ENCODE measurements at regions of chr12 and their contacts with region 1.

Region 1: GRCh38 chr12:48105862-48106680 is at the start of gene SENP1:
- DNase-seq: peak; percentile 92
- ATAC-seq: peak; percentile 81
- H3K4me3 Mint-ChIP-seq: peak within 1 kb of the TSS; percentile 88
- H3K27ac Mint-ChIP-seq: peak within 1 kb of the TSS; percentile 94
- H3K4me1 Mint-ChIP-seq: peaks cover 54% of the 10 kb centered on the region
- H3K27me3 Mint-ChIP-seq: no peaks in the 10 kb centered on the region
- total RNA-seq, gene SENP1: 45.6 to 50.1 TPM

Region 2: GRCh38 chr12:48119078-48119833 is 13.2 kb after region 1 on chr12 and contains the start of gene PFKM:
- CTCF ChIA-PET with region 1: interaction called, 10 read pairs
- POLR2A ChIA-PET with region 1: interaction called, 5 read pairs
- DNase-seq: peak; percentile 85
- ATAC-seq: peak; percentile 100
- H3K4me3 Mint-ChIP-seq: peak within 1 kb of the TSS; percentile 95
- H3K27ac Mint-ChIP-seq: peak within 1 kb of the TSS; percentile 77
- H3K4me1 Mint-ChIP-seq: peaks cover 18% of the 10 kb centered on the region
- H3K27me3 Mint-ChIP-seq: peaks cover 21% of the 10 kb centered on the region
- total RNA-seq, gene PFKM: 20.6 to 22.7 TPM

Region 3: DNA sequence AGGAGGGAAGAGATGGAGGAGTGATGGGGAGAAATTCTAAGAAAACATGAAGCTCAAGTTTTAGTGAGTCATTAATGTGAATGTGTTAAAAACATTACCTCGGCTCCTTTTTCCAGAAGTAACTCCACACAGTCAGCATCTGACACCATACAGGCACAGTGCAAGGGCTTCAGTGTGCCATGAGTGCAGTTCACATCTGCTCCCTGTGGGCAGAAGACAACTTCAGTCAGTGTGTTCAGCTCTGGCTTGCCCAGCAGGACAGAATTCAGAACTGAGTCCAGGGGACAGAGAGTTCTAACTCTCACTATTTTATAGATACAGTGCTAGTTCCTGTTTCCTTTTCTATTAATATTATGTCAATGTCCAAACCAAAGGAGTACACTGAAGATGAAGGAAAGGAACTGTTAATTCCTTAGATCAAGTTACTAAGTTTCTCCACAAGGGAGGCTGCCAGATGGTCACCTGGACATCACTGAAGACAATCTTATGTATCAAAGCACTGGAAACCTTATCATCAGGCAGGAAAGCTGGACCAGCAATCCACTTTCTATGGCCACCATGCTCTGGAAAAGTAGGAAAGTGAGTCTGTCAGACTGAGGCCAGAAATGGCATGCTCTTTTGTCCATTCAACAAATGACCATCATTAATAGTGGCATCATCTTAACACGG is 45.2 kb after region 1 on chr12:
- CTCF ChIA-PET with region 1: interaction called, 13 read pairs
- POLR2A ChIA-PET with region 1: interaction called, 35 read pairs
- DNase-seq: no peak
- ATAC-seq: no peak
- H3K4me3 Mint-ChIP-seq: no peak overlapping the region
- H3K27ac Mint-ChIP-seq: no peak overlapping the region
- H3K4me1 Mint-ChIP-seq: peaks cover 20% of the 10 kb centered on the region
- H3K27me3 Mint-ChIP-seq: no peaks in the 10 kb centered on the region

Region 4: DNA sequence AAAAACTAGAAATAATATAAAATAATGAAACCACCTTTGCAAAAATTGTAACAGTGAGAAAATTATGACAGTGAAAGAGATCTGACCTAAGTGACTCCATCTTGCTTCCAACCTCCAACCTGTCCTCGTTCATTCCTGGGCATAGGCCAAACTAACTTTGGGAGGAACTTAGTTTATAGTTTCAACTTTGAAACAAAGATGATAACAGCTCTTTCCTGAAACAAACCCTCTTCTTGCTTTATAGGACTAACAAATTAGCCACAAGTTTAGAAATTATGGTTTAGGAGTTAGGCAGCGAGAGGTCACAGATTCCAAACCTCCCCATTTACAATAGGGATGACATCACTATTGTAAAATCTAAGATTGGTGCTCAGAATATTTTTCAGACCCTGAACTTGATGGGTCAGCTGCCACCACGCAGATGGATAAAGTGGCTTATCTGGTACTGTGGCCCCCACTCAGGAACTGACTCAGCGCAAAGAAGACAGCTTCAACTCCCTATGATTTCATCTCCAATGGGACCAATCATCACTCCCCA is 129.8 kb after region 1 on chr12:
- CTCF ChIA-PET with region 1: no interaction called
- POLR2A ChIA-PET with region 1: no interaction called
- DNase-seq: no peak
- ATAC-seq: no peak
- H3K4me3 Mint-ChIP-seq: no peak overlapping the region
- H3K27ac Mint-ChIP-seq: no peak overlapping the region
- H3K4me1 Mint-ChIP-seq: no peaks in the 10 kb centered on the region
- H3K27me3 Mint-ChIP-seq: peaks cover 15% of the 10 kb centered on the region

Measured in activated CD8-positive, alpha-beta T cell treated with anti-CD3 and anti-CD28 coated beads, Interleukin-2, amount 10 ng/mL, durations not matched to agents 7 days and 5 days (primary cell).